Mammary epithelial cell (primary cell): ENCODE measurements at regions of chr21 and their contacts with region 1.

Region 1: GRCh38 chr21:30340441-30341241 is 3.1 kb upstream of the KRTAP27-1 start:
- DNase-seq: peak; percentile 45
- H3K4me3 ChIP-seq: no peak overlapping the region
- H3K27ac ChIP-seq: no peak overlapping the region
- H3K4me1 ChIP-seq: peaks cover 19% of the 10 kb centered on the region
- H3K27me3 ChIP-seq: no peaks in the 10 kb centered on the region
- CTCF ChIP-seq: peak; percentile 95 to 97

Region 2: GRCh38 chr21:30268608-30269240 is 71.9 kb before region 1 on chr21:
- CTCF ChIA-PET with region 1: interaction called, 13 read pairs
- dilution Hi-C with region 1: no loop called
- in situ Hi-C with region 1: no loop called
- intact Hi-C with region 1: no loop called
- DNase-seq: no peak
- H3K4me3 ChIP-seq: no peak overlapping the region
- H3K27ac ChIP-seq: no peak overlapping the region
- H3K4me1 ChIP-seq: no peaks in the 10 kb centered on the region
- H3K27me3 ChIP-seq: no peaks in the 10 kb centered on the region
- CTCF ChIP-seq: peak; percentile 36 to 60

Region 3: DNA sequence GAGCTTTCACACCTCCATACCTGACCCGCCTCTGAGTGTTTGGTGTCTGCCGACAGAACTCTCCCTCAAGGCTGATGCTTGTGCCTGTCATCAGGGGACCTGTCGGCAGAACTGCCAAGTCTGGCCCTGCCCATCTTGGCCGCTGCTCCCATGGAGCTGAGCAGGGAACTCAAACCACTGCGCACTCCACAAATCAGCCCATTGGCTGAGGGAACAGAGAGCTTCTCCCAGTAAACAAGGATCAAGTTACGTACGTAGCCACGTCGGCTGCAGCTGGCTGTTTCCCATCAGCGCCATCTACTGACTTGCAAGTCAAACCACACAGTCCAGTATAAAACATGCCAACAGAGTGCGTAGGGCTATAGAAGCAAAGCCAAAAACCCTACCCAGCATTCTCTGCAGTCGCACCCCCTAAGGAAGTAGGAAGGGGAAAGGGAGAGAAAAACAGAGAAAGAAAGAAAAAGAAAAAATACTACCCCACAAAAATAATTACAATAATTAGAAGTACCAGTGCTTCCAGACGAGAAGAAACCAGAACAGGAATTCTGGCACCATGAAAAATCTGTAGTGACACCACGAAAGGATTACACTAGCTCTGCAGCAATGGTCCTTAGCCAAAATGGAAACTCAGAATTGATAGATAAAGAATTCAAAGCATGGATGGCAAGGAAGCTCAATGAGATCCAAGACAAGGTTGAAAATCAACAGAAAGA is 68.3 kb after region 1 on chr21:
- CTCF ChIA-PET with region 1: interaction called, 3 read pairs
- dilution Hi-C with region 1: no loop called
- in situ Hi-C with region 1: no loop called
- intact Hi-C with region 1: loop called (anchors 1 kb)
- DNase-seq: peak; percentile 83
- H3K4me3 ChIP-seq: peak overlapping the region in 1 of 3 experiments; percentile 27
- H3K27ac ChIP-seq: no peak overlapping the region
- H3K4me1 ChIP-seq: no peaks in the 10 kb centered on the region
- H3K27me3 ChIP-seq: no peaks in the 10 kb centered on the region
- CTCF ChIP-seq: peak; percentile 82 to 87

Region 4: DNA sequence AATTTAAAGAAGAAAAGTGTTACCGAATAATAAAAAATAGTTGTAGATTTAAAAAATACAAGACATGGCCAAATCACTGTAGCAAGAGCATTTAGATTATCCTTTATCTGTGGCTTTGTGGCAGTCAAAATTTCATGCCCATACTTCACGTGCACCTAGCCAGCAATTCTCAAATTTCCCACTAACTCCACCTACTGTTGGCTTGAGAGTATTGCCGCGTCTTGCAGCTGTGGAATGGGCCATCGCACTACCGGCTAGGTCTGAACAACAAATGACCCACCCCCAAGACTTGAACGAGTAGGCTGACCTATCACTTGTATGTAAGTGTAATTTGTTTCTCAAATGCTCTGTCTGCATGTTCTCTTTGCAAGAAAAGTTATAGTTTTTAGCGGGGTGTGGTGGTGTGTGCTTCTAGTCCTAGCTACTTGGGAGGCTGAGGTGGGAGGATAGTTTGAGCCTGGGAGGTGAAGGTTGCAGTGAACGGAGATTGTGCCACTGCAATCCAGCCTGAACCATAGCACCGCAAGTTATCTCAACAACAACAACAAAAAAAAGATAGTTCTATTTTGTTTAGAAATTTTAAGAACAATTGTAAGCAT is 93.5 kb after region 1 on chr21:
- CTCF ChIA-PET with region 1: no interaction called
- dilution Hi-C with region 1: no loop called
- in situ Hi-C with region 1: no loop called
- intact Hi-C with region 1: loop called (anchors 2 kb)
- DNase-seq: peak; percentile 42
- H3K4me3 ChIP-seq: no peak overlapping the region
- H3K27ac ChIP-seq: no peak overlapping the region
- H3K4me1 ChIP-seq: no peaks in the 10 kb centered on the region
- H3K27me3 ChIP-seq: no peaks in the 10 kb centered on the region
- CTCF ChIP-seq: peak; percentile 74 to 79

Region 5: DNA sequence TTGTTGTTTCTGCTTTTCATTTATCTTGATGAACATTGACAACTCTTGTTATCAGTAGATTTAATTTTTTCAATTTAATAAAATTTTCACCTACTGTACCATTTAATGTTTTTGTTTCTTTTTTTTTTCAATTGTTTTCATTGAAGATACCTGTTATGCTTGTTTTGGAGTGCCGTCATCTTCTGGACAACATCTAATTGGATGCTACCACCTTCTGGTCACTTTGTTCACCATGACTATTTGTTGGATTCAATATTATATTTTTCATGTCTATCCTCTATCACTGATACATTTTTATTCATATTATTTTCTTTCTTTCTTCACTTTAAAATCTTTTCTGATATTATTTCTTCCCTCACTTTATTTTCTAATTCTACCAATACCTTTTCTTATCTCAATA is 392.4 kb after region 1 on chr21:
- CTCF ChIA-PET with region 1: no interaction called
- dilution Hi-C with region 1: no loop called
- in situ Hi-C with region 1: no loop called
- intact Hi-C with region 1: loop called (anchors 1 kb)
- DNase-seq: peak; percentile 35
- H3K4me3 ChIP-seq: no peak overlapping the region
- H3K27ac ChIP-seq: no peak overlapping the region
- H3K4me1 ChIP-seq: no peaks in the 10 kb centered on the region
- H3K27me3 ChIP-seq: no peaks in the 10 kb centered on the region
- CTCF ChIP-seq: peak; percentile 15 to 42

Region 6: DNA sequence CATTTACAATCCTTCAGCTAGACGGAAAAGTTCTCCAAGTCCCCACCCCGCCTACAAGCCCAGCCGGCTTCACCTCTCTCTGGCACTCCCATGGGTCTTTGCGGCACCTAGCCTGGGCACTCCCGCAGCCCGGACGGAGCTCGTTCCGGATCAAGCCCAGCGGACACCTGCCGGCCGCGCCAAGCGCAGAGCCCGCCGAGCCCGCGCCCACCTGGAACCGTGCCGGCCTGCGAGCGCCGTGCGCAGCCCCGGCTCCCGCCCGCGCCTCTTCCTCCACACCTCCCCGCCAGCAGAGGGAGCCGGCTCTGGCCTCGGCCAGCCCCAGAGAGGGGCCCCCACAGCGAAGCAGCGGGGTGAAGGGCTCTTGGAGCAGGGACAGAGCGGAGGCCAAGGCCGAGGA is 747.7 kb after region 1 on chr21:
- CTCF ChIA-PET with region 1: no interaction called
- dilution Hi-C with region 1: no loop called
- in situ Hi-C with region 1: no loop called
- intact Hi-C with region 1: loop called (anchors 2 kb)
- DNase-seq: no peak
- H3K4me3 ChIP-seq: no peak overlapping the region
- H3K27ac ChIP-seq: no peak overlapping the region
- H3K4me1 ChIP-seq: no peaks in the 10 kb centered on the region
- H3K27me3 ChIP-seq: no peaks in the 10 kb centered on the region
- CTCF ChIP-seq: no peak